ENCODE measurements at regions of chr21 and their contacts with region 1.

Region 1: GRCh38 chr21:33924079-33924765 is 8.6 kb upstream of the ATP5PO start:
- H3K4me3 ChIP-seq: no peak overlapping the region
- H3K27ac ChIP-seq: no peak overlapping the region
- H3K4me1 ChIP-seq: no peaks in the 10 kb centered on the region
- CTCF ChIP-seq: peak; percentile 94

Region 2: DNA sequence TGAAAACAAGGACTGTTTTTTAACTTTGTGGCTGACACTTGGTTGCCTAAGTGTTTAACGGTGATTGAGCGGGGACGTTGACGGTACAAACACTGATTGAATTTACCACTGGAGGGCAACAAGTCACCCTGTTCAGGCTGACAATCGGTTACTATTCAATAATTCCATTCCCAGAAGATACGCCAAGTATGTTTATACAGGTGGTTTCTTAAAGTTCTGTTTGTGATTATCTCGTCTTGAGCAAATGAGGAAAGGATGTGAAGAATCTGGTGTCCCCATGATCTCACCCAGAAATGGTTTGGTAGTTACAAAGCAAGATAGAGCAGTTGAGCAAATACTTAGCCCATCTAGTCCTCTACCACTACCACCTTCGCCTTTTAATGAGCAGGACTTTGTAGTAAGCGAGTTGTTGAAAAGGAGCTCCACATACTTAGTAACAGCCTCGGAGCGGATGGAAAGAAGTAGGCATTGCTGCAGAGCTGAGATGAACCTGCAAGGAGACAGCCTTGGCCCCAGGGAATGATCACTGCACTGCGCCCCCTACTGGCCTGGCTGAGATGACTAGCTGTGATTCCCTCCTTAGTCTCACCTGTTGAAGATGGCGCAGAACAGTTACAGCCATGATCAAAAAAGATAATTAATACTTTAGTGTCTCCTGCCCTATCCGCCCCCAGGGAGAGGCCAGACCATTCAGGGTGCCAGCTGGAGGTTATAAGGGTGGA is 563.2 kb before region 1 on chr21:
- CTCF ChIA-PET with region 1: no interaction called
- POLR2A ChIA-PET with region 1: no interaction called
- H3K4me3 ChIP-seq: no peak overlapping the region; the same call in 1 of the 2 replicates
- H3K27ac ChIP-seq: no peak overlapping the region
- H3K4me1 ChIP-seq: no peaks in the 10 kb centered on the region
- CTCF ChIP-seq: peak; percentile 86

Region 3: GRCh38 chr21:34023691-34024373 is 99.6 kb after region 1 on chr21:
- CTCF ChIA-PET with region 1: interaction called, 11 read pairs
- POLR2A ChIA-PET with region 1: no interaction called
- H3K4me3 ChIP-seq: no peak overlapping the region
- H3K27ac ChIP-seq: no peak overlapping the region
- H3K4me1 ChIP-seq: peaks cover 18% of the 10 kb centered on the region
- CTCF ChIP-seq: no peak

Region 4: DNA sequence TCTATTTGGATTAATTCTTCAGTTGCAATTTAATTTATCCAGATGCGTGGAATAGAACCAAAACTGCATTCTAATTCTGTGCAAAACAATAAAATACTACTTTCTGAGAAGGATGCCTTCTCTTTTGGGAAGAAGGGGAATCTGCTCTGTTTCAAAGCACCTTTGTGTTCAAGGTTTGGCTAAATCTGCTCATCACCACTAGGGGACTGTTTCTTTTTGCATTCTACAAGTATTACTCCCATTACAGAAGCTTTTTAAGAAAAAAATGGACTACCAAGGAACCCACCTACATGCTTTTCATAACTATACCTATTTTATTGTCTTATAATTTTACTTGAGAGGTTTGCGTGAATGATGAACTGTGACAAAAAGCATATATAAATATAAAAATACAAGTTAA is 167.4 kb after region 1 on chr21:
- CTCF ChIA-PET with region 1: interaction called, 13 read pairs
- POLR2A ChIA-PET with region 1: no interaction called
- H3K4me3 ChIP-seq: no peak overlapping the region
- H3K27ac ChIP-seq: no peak overlapping the region
- H3K4me1 ChIP-seq: peaks cover 23% of the 10 kb centered on the region
- CTCF ChIP-seq: no peak

Region 5: GRCh38 chr21:34141373-34141772 is 217.2 kb after region 1 on chr21:
- CTCF ChIA-PET with region 1: interaction called, 11 read pairs
- POLR2A ChIA-PET with region 1: no interaction called
- H3K4me3 ChIP-seq: no peak overlapping the region
- H3K27ac ChIP-seq: no peak overlapping the region
- H3K4me1 ChIP-seq: no peaks in the 10 kb centered on the region
- CTCF ChIP-seq: no peak

Region 6: DNA sequence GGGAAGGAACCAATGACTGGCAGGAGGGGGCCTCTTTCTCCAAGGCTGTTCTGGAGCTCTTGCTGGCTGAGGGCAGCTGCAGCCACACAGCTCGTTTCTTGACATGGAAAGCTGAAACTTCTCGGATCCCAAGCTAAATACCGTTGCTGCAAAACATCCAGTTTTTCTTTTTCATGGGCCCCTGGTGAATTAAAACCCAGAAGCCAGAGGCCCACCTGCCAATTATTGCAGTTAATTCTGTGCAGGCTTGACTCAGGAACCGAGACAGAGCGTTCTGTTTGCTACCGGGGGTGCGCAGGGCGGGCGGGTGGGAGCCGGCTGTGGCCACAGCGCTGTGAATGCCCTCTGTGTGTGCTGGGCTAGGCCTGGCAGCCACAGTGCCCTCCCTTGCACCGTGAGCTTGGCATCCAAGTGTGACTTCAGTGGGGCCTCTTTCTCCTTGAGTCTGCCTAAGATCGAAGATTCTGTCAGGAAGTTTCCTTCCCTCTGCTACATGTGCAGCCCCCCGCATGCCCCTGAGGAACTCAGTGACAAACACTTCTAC is 419.7 kb after region 1 on chr21:
- CTCF ChIA-PET with region 1: interaction called, 219 read pairs
- POLR2A ChIA-PET with region 1: interaction called, 6 read pairs
- H3K4me3 ChIP-seq: no peak overlapping the region
- H3K27ac ChIP-seq: no peak overlapping the region
- H3K4me1 ChIP-seq: no peaks in the 10 kb centered on the region
- CTCF ChIP-seq: no peak